Mammary epithelial cell (primary cell): ENCODE measurements at regions of chr22 and their contacts with region 1.

Region 1: GRCh38 chr22:26330966-26331625 is 98.0 kb upstream of the ASPHD2 start:
- DNase-seq: peak; percentile 57
- H3K4me3 ChIP-seq: no peak overlapping the region
- H3K27ac ChIP-seq: no peak overlapping the region
- H3K4me1 ChIP-seq: no peaks in the 10 kb centered on the region
- H3K27me3 ChIP-seq: no peaks in the 10 kb centered on the region
- CTCF ChIP-seq: peak; percentile 92

Region 2: GRCh38 chr22:25447686-25448434 is 883.2 kb before region 1 on chr22:
- CTCF ChIA-PET with region 1: no interaction called
- dilution Hi-C with region 1: no loop called
- in situ Hi-C with region 1: loop called (anchors 25 kb)
- intact Hi-C with region 1: no loop called
- DNase-seq: peak; percentile 80
- H3K4me3 ChIP-seq: peak overlapping the region; percentile 80 to 93 (median 90)
- H3K27ac ChIP-seq: peak overlapping the region; percentile 82
- H3K4me1 ChIP-seq: peaks cover 21% of the 10 kb centered on the region
- H3K27me3 ChIP-seq: no peaks in the 10 kb centered on the region
- CTCF ChIP-seq: peak; percentile 88 to 94

Region 3: GRCh38 chr22:25465949-25466348 is 865.1 kb before region 1 on chr22:
- CTCF ChIA-PET with region 1: no interaction called
- dilution Hi-C with region 1: no loop called
- in situ Hi-C with region 1: loop called (anchors 25 kb)
- intact Hi-C with region 1: loop called (anchors 2 kb)
- DNase-seq: no peak
- H3K4me3 ChIP-seq: no peak overlapping the region
- H3K27ac ChIP-seq: no peak overlapping the region
- H3K4me1 ChIP-seq: no peaks in the 10 kb centered on the region
- H3K27me3 ChIP-seq: no peaks in the 10 kb centered on the region
- CTCF ChIP-seq: no peak

Region 4: DNA sequence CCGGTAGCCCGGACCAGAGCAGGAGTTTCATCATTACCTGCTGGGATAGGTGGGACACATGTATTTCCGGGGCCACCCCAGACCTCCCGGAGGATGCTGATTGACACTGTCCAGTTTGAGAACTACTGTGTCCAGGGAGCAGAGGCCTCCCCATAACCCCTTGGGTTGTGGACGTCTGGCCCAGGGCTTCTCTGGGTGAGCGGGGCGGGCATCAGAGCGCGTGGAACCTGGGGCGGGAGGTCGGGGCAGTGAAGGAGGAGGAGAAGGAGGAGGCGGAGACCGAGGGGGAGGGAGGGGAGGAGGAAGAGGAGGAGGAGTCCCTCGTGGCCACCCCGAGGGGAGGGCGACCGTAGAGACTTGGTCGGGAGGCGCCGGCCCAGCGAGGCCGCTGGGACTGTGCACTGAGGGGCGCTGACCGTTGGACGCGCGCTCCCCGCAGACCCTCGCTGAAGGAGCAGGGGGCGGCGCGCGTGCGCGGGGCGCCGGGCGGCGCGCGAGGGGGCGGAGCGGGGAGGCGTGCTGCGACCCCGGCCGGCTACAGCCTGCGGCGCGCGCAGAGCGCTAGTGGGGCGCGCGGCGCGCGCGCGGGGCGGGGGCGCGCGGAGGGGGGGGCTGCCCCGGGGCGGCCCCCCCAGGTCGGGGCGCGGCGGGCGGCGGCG is 766.6 kb before region 1 on chr22 and contains the start of gene GRK3:
- CTCF ChIA-PET with region 1: no interaction called
- dilution Hi-C with region 1: no loop called
- in situ Hi-C with region 1: no loop called
- intact Hi-C with region 1: loop called (anchors 10 kb)
- DNase-seq: peak; percentile 70
- H3K4me3 ChIP-seq: peak within 1 kb of the TSS; percentile 62 to 76 (median 65)
- H3K27ac ChIP-seq: peak within 1 kb of the TSS; percentile 22
- H3K4me1 ChIP-seq: peaks cover 10% of the 10 kb centered on the region
- H3K27me3 ChIP-seq: no peaks in the 10 kb centered on the region
- CTCF ChIP-seq: no peak
- total RNA-seq, gene GRK3: 12.8 to 16.0 TPM

Region 5: GRCh38 chr22:25898689-25899365 is 432.3 kb before region 1 on chr22:
- CTCF ChIA-PET with region 1: interaction called, 4 read pairs
- dilution Hi-C with region 1: no loop called
- in situ Hi-C with region 1: no loop called
- intact Hi-C with region 1: loop called (anchors 2 kb)
- DNase-seq: no peak
- H3K4me3 ChIP-seq: no peak overlapping the region
- H3K27ac ChIP-seq: no peak overlapping the region
- H3K4me1 ChIP-seq: no peaks in the 10 kb centered on the region
- H3K27me3 ChIP-seq: no peaks in the 10 kb centered on the region
- CTCF ChIP-seq: peak; percentile 20 to 29

Region 6: DNA sequence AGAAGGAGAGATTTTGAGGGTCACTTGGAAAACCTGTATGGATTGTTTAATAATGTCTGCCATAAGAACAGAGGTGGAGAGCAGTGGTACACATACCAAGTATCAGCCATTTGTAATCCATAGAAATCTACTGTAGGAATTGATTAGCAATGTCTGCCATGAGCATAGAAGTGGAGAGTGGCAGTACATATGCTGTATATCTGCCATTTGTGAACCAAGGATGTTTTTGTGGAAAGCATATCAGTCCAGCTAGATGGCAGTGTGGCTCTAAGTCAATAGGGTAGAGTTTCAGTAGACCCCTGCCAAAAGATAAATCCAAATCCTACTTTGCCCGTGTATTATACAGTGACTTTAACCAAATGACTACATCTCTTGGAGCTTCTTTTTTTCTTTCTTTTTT is 244.7 kb before region 1 on chr22:
- CTCF ChIA-PET with region 1: no interaction called
- dilution Hi-C with region 1: no loop called
- in situ Hi-C with region 1: no loop called
- intact Hi-C with region 1: loop called (anchors 10 kb)
- DNase-seq: no peak
- H3K4me3 ChIP-seq: no peak overlapping the region
- H3K27ac ChIP-seq: no peak overlapping the region
- H3K4me1 ChIP-seq: no peaks in the 10 kb centered on the region
- H3K27me3 ChIP-seq: no peaks in the 10 kb centered on the region
- CTCF ChIP-seq: peak in 1 of 2 donors; percentile 6